ENCODE measurements at regions of chr21 and their contacts with region 1.

Region 1: DNA sequence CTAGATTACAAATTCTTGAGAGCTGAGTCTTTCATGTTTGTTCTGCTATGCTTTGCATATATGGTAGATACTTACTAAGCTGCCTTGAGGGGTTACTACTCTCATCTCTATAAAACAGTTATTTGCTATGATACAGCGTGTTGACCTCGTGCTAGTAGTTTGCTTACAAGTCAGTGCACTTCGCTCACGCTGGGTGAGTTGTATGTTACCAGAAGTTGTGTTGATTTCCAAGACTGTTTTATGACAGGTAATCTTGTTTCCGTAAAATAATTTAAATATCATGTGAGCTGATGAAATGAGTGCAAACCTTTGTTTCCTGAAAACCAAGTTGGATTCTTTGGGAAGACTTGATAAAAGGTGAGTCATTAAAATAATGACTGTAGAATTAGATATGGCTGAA is 7.3 kb downstream of the MRPS6 start:
- DNase-seq: no peak
- ATAC-seq: no peak
- H3K4me3 ChIP-seq: no peak overlapping the region
- H3K27ac ChIP-seq: no peak overlapping the region
- H3K4me1 ChIP-seq: peaks cover 0 to 82% (median 37%) of the 10 kb centered on the region in 9 donors
- H3K27me3 ChIP-seq: no peaks in the 10 kb centered on the region
- CTCF ChIP-seq: no peak

Region 2: GRCh38 chr21:33948096-33948950 is 132.4 kb before region 1 on chr21:
- intact Hi-C with region 1: no loop called
- DNase-seq: peak; percentile 30 to 50
- ATAC-seq: peak; percentile 13 to 77 (median 68)
- H3K4me3 ChIP-seq: peak overlapping the region in 6 of 10 donors; percentile 2 to 32 (median 20)
- H3K27ac ChIP-seq: peak overlapping the region in 7 of 10 donors; percentile 3 to 84 (median 52)
- H3K4me1 ChIP-seq: peaks cover 0 to 52% (median 8%) of the 10 kb centered on the region in 9 donors
- H3K27me3 ChIP-seq: no peaks in the 10 kb centered on the region
- CTCF ChIP-seq: no peak

Region 3: DNA sequence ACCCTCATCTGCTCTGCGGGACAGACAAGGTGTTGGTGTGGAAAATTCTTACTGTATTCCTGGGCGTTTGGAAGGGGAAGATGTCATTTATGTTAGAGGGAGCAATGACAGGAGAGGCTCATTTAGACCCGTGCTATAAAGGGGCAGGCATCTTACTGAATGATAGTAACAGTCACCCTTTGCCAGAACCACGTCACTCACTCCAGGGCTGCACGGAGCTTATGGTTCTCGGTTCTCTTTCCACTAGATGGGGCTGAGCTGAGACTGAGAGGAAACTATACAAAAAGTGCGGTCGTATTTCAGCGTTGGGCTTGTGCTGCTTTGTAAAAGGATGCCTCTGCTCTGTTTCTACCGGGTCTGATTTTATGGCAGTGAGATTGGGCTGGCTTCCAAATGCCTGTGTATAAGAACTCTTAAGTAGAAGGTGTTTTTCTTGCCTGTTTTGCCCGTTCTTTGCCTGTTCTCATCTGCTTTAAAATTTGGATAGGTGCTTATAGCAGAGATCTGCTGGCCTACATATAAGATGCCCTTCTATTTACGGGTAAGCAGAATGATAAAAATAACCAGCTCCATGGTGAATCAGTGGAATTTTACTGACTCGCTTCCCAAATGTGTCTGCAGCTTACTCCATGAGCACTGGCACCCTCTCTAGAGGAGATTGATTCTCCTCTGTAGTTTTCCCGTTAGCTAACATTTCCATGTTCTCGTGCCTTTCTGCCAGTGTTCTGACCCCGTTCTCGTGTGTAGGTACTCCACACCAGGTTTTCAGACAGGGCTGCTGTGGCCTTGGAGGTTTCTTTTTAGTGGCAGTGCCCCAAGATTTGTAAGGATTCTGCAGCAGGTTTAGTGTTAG is 48.6 kb after region 1 on chr21:
- intact Hi-C with region 1: loop called in 4 of 10 experiments (anchors 5 kb)
- DNase-seq: peak; percentile 41 to 79
- ATAC-seq: peak; percentile 90 to 95 (median 92)
- H3K4me3 ChIP-seq: peak overlapping the region in 7 of 10 donors; percentile 2 to 34 (median 24)
- H3K27ac ChIP-seq: peak overlapping the region; percentile 34 to 82 (median 76)
- H3K4me1 ChIP-seq: peaks cover 3 to 70% (median 62%) of the 10 kb centered on the region in 9 donors
- H3K27me3 ChIP-seq: no peaks in the 10 kb centered on the region
- CTCF ChIP-seq: peak in 8 of 9 donors; percentile 8 to 63 (median 40)